ENCODE measurements at regions of chr17 and their contacts with region 1.

Region 1: GRCh38 chr17:76397687-76398487 is 13.5 kb downstream of the SPHK1 start:
- DNase-seq: peak; percentile 89
- CTCF ChIP-seq: peak; percentile 96

Region 2: DNA sequence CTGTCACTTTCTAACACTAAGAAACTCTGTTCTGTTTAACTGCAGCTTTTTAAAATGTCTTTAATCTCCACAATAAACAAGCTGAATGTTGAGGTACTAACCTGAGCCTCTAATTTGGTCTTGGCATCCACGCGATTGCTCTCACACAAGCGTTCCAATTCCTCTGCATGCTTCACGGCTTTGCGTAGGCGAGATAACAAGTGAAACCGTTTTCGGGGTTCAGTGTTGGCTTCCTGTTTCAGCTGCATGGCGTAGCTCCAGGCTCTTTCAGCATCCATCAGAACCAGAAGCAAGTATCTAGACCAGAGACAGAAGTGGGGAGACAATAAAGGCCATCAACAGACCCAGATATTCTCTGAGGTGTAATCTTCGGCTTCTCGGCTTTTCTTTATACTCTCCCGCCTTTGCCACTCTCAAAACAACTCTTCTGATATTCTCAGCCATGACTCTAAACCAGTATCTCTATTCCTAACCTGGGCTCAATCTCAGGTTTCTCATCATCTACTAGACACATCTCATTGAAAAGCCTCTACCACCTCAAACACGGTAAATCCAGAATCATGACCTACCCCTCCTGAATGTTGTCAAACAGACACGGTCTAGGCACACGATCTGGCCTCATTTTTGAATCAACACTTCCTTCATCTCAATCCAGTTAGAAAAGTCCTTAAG is 333.9 kb before region 1 on chr17:
- CTCF ChIA-PET with region 1: interaction called, 10 read pairs
- POLR2A ChIA-PET with region 1: no interaction called
- DNase-seq: no peak
- CTCF ChIP-seq: no peak

Region 3: DNA sequence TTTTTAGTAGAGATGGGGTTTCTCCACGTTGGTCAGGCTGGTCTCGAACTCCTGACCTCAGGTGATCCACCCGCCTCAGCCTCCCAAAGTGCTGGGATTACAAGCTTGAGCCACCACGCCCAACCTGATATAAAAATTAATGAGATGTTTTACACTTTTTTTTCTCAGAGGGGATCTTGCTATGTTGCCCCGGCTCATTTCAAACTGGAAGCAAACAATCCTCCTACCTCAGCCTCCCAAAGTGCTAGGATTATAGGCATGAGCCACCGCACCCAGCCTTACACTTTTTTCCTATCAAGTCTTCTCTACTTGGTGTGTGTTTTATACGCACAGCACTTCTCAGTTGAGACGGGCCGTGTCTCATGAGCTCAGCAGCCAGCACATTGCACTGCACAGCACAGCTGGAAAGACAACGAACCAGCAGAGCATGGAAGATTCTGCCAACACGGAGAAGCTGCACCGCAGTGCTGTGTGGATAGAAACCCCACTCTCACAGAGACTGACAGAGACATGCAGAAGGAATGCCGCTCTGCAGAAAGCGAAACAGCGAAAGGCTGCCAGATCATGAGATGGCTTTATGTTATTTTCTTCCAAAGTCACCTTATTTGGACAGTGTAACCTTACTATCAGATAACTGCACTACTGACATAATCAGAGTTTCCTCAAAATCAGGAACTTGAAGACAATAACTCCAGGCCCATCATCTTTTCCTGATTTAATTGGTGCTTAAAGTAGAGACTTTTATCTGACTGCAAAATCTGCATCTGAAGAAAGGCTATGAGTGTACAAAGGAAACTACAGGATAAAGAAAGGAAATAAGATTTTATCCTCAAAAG is 83.3 kb before region 1 on chr17:
- CTCF ChIA-PET with region 1: interaction called, 24 read pairs
- POLR2A ChIA-PET with region 1: no interaction called
- DNase-seq: no peak
- CTCF ChIP-seq: no peak

Region 4: DNA sequence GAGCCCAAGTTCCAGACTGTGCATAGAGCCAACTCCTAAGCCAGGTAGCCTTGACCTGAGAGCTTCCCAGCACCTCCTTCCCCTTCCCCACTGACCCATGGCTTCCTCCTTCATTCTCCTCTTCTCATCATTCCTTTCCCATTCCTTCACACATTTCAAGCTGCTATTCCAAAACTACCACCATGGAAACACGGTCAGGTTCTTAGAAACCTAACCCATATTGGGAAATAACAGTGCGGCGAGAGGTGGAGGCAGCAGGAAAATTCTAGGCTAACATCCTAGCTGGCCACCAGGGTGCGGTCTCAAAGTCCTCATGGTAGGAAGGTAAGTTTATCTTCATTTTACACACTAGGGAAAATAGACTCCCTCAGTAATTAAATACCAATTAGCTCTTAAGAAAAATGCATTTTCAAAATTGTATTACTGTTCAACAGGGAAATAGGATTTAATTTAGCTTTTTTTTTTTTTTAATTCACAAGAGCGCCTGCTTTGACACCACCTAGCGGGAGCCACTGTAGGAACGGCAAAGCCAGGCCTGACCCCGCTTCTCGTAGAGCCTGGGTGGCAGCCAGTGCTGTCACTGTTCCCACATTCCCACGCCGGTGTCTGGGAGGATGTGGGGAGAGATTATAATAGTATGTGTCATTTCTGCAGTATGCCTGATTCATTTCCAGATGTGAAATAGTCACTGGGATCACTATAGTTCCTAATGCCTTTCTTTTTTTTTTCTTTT is 27.5 kb before region 1 on chr17:
- CTCF ChIA-PET with region 1: interaction called, 24 read pairs
- POLR2A ChIA-PET with region 1: no interaction called
- DNase-seq: no peak
- CTCF ChIP-seq: no peak

Region 5: GRCh38 chr17:76408052-76408849 is 10.4 kb after region 1 on chr17:
- CTCF ChIA-PET with region 1: interaction called, 85 read pairs
- POLR2A ChIA-PET with region 1: no interaction called
- DNase-seq: peak; percentile 79
- CTCF ChIP-seq: peak; percentile 89

Region 6: GRCh38 chr17:76437467-76438402 is 39.8 kb after region 1 on chr17:
- CTCF ChIA-PET with region 1: interaction called, 25 read pairs
- POLR2A ChIA-PET with region 1: no interaction called
- DNase-seq: no peak
- CTCF ChIP-seq: no peak